ENCODE measurements at regions of chr12 and their contacts with region 1.

Region 1: GRCh38 chr12:9760699-9761418 is at the start of gene CD69:
- DNase-seq: peak; percentile 66 to 89 (median 85)
- H3K4me3 ChIP-seq: peak within 1 kb of the TSS; percentile 68
- H3K4me3 Mint-ChIP-seq: peak within 1 kb of the TSS; percentile 93 to 100 (median 98)
- H3K27ac ChIP-seq: peak within 1 kb of the TSS; percentile 96
- H3K27ac Mint-ChIP-seq: peak within 1 kb of the TSS; percentile 97 to 100 (median 99)
- H3K4me1 ChIP-seq: peaks cover 49% of the 10 kb centered on the region
- H3K4me1 Mint-ChIP-seq: peaks cover 58 to 72% (median 71%) of the 10 kb centered on the region in 3 donors
- H3K27me3 ChIP-seq: no peaks in the 10 kb centered on the region
- H3K27me3 Mint-ChIP-seq: no peaks in the 10 kb centered on the region
- total RNA-seq, gene CD69: 66.8 to 67.1 TPM

Region 2: DNA sequence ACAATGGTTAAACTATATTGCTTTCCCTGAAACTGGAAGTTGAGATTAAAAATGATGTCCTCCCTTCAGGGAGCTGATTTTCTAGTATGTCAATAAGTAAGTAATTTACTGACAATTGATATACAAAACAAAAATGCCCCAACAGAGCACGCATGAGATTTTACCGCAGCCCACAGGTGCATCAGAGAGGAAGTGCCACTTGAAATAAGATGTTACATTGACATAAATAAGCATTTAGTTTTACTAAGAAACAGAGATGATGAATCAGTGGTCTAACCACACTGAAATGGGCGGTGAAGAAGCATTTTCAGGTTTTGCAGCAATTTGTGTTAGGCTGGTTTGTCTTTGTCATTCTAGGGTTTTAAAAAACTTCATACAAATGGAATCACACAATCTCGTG is 19.1 kb before region 1 on chr12:
- CTCF ChIA-PET with region 1: interaction called, 98 read pairs
- POLR2A ChIA-PET with region 1: interaction called, 8 read pairs
- DNase-seq: peak; percentile 50 to 90 (median 89)
- H3K4me3 ChIP-seq: peak overlapping the region; percentile 33
- H3K4me3 Mint-ChIP-seq: peak overlapping the region; percentile 33 to 88 (median 82)
- H3K27ac ChIP-seq: peak overlapping the region; percentile 60
- H3K27ac Mint-ChIP-seq: peak overlapping the region; percentile 19 to 99 (median 97)
- H3K4me1 ChIP-seq: peaks cover 62% of the 10 kb centered on the region
- H3K4me1 Mint-ChIP-seq: peaks cover 53 to 80% (median 75%) of the 10 kb centered on the region in 3 donors
- H3K27me3 ChIP-seq: no peaks in the 10 kb centered on the region
- H3K27me3 Mint-ChIP-seq: no peaks in the 10 kb centered on the region

Region 3: DNA sequence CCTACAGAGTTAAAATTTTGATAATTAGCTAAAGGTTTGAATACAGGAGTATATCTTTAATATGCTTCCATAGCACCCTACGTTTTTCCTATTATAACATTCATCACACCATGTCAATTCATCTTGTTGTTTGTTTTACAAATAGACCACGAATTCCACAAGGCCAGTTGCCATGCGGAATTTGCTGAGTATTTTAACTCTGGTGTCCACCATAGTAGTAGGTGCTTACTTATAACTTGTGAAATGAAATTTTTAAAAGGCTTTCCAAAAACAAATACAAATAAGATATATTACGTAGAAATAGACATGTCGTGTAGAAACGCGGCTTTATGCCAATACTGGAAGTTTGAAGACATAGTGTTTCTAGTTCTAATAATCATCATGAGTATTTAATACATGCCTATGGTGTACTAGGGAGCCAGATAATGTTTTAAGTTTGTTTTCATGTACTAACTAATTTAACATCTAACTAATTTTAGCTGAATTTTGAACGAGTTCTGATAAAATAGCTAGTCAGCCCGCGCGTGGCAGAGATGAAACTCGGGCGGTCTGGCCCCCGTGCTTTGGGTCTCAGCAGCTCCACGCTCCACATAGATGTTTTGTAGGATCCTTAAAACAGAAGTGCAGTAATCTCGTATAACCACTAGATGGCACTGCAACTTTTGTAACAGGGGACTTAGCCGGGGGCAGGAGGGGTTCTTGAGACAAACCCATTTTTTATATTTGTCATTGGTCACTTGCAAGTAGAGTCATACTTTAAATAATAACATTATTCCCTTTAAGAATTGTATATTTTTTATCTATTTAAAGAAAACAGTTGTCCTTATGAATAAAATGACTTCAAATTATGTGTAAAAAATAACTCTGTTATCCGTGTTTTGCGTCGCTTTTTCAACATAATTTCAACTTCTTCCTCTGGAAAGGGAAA is 10.3 kb before region 1 on chr12:
- CTCF ChIA-PET with region 1: interaction called, 98 read pairs
- POLR2A ChIA-PET with region 1: interaction called, 15 read pairs
- DNase-seq: peak; percentile 26 to 75 (median 65)
- H3K4me3 ChIP-seq: no peak overlapping the region
- H3K4me3 Mint-ChIP-seq: peak overlapping the region; percentile 28 to 74 (median 66)
- H3K27ac ChIP-seq: no peak overlapping the region
- H3K27ac Mint-ChIP-seq: peak overlapping the region in 6 of 8 donors; percentile 11 to 88 (median 58)
- H3K4me1 ChIP-seq: peaks cover 49% of the 10 kb centered on the region
- H3K4me1 Mint-ChIP-seq: peaks cover 47 to 54% (median 54%) of the 10 kb centered on the region in 3 donors
- H3K27me3 ChIP-seq: no peaks in the 10 kb centered on the region
- H3K27me3 Mint-ChIP-seq: peaks cover 0 to 2% of the 10 kb centered on the region in 2 donors

Region 4: DNA sequence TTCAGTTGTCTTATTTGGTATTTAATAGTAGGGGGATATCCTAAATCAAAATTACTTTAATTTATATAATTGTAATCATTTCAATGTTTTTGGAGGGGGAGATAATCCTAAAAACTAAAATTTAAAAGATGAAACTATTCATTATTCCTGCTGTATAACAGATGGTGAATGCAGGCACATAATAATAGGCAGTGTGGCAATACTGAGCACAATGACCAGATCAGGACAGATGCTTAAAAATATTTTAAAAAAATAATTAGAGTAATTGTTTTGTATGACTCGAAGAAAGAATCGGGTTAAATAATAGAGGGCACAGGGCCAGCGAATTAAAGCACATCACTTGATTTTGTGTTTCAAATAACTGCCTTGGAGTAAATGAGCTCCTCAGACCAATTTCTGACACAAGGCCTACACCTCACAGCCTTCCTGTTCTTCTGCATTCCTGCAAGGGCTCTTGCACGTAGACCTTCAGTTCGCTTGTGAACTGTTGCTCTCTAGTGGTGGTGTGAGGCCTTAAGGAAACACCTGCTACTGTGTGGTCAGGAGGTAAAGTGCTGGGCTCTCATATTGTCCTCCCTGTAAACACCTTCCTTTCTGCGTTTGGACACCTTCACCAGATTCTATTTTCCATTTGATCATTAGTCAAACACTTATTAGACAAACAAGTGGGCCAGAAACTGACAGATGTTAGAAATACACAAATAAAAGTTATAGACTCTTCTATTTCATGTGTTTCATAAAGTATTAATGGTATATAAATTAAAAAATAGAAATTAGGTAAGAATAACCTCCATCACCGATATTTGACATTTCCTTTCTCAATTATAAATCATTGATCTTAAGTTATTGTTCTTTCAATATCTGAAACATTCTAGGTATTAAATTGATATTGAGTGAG is 37.1 kb after region 1 on chr12:
- CTCF ChIA-PET with region 1: interaction called, 359 read pairs
- POLR2A ChIA-PET with region 1: interaction called, 35 read pairs
- DNase-seq: peak; percentile 26 to 83 (median 71)
- H3K4me3 ChIP-seq: no peak overlapping the region
- H3K4me3 Mint-ChIP-seq: peak overlapping the region in 4 of 7 donors; percentile 11 to 38 (median 25)
- H3K27ac ChIP-seq: no peak overlapping the region
- H3K27ac Mint-ChIP-seq: peak overlapping the region in 6 of 8 donors; percentile 1 to 96 (median 76)
- H3K4me1 ChIP-seq: peaks cover 52% of the 10 kb centered on the region
- H3K4me1 Mint-ChIP-seq: peaks cover 48 to 54% (median 48%) of the 10 kb centered on the region in 3 donors
- H3K27me3 ChIP-seq: no peaks in the 10 kb centered on the region
- H3K27me3 Mint-ChIP-seq: no peaks in the 10 kb centered on the region

Region 5: DNA sequence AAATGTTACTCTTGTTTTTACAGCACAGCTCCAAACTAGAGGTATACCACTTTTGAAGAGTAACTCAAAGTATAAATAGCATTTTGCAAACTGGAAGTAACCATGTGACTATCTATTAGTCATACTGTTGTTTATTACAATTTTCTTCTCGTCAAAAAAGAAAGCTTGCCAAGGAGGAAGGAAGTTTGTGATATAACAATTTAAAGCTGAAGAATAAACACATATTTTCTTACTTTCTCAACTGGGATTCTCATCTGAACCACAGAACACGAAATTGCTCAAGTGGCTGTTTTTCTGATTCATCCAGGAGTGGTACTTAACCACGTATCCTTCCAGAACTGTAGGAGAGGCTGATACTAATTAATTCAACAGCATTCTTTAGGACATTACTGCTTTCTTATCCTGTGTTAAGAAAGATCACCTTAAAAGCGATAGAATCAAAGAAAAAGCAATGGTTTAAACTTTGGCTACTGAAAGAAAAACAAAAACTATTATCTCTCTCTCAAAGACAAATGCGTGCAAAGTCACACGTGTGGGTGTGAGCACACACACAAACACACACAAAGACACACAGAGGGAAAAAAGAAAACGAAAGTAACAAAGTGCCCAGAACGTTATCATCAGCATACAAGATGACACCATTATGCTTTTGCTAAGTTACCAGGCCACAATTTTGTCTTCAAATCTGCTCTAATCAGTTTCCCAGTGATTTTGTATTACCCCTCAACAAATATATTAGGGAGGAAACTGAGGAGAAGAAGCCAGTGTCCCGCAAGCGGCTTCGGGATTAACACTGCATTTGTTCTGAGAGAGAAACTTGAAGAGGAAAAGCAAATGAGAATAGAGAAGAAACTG is 108.7 kb after region 1 on chr12 and contains the start of gene CLEC2B:
- CTCF ChIA-PET with region 1: no interaction called
- POLR2A ChIA-PET with region 1: interaction called, 21 read pairs
- DNase-seq: peak in 3 of 5 donors; percentile 59 to 63 (median 61)
- H3K4me3 ChIP-seq: peak within 1 kb of the TSS; percentile 65
- H3K4me3 Mint-ChIP-seq: peak within 1 kb of the TSS; percentile 88 to 97 (median 91)
- H3K27ac ChIP-seq: peak within 1 kb of the TSS; percentile 73
- H3K27ac Mint-ChIP-seq: peak within 1 kb of the TSS; percentile 89 to 100 (median 96)
- H3K4me1 ChIP-seq: peaks cover 9% of the 10 kb centered on the region
- H3K4me1 Mint-ChIP-seq: peaks cover 20 to 40% (median 22%) of the 10 kb centered on the region in 3 donors
- H3K27me3 ChIP-seq: no peaks in the 10 kb centered on the region
- H3K27me3 Mint-ChIP-seq: no peaks in the 10 kb centered on the region
- total RNA-seq, gene CLEC2B: 13.7 to 16.5 TPM

Measured in CD8-positive, alpha-beta memory T cell (primary cell).